Natural killer cell (primary cell): ENCODE measurements at regions of chr6 and their contacts with region 1.

Region 1: DNA sequence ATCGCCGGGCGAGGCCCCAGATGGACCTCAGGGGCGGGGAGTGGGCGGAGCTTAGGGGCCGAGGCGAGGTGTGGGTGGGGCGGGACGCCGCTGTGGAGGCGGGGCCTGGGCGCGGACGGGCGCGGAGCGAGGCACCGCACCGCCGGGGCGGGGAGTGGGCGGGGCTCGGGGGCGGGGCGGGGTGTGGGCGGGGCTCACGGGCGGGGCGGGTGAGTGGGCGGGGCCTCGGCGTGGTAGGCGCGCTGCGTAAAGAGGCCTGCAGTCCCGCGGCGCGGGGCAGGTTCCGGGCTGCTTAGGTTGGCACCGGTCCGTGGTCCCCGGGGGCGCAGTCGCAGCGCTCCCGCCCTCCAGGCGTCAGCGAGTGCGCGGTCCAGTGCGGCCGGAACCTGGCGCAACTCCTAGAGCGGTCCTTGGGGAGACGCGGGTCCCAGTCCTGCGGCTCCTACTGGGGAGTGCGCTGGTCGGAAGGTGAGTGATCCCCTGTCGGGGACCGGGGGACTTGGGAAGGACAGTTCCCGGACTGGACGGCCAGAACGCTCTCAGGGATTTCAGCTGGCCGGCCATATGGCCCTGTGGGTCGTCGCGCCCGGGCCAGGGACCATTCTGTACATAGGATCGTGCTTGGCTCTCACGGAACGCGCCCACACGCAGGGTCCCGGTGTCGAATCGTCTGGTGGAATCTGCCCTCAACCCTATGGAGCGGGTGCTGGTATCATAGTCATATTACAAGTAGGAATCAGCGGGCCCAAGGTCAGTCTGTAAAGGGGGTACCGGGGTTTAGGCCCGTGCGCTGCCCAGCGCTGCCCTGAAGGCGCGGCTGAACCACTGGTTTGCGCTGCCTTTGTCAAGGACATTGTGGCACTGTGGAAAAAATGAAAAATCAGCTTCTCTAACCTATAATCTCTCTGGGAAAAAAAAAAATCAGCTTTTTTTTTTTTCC is at the start of gene NQO2:
- DNase-seq: peak; percentile 86 to 93
- ATAC-seq: peak; percentile 80 to 94 (median 88)
- H3K4me3 ChIP-seq: peak within 1 kb of the TSS; percentile 88
- H3K4me3 Mint-ChIP-seq: peak within 1 kb of the TSS; percentile 92
- H3K27ac ChIP-seq: peak within 1 kb of the TSS; percentile 76
- H3K27ac Mint-ChIP-seq: peak within 1 kb of the TSS; percentile 74 to 86
- H3K4me1 ChIP-seq: peaks cover 23% of the 10 kb centered on the region
- H3K4me1 Mint-ChIP-seq: peaks cover 21 to 37% of the 10 kb centered on the region in 2 donors
- H3K27me3 ChIP-seq: no peaks in the 10 kb centered on the region
- H3K27me3 Mint-ChIP-seq: no peaks in the 10 kb centered on the region
- CTCF ChIP-seq: no peak
- total RNA-seq, gene NQO2: 13.1 to 21.7 (median 16.2) TPM

Region 2: GRCh38 chr6:2244316-2245093 is 755.4 kb before region 1 on chr6:
- intact Hi-C with region 1: no loop called
- DNase-seq: no peak
- ATAC-seq: no peak
- H3K4me3 ChIP-seq: peak overlapping the region; percentile 77
- H3K4me3 Mint-ChIP-seq: peak overlapping the region; percentile 91
- H3K27ac ChIP-seq: peak overlapping the region; percentile 36
- H3K27ac Mint-ChIP-seq: peak overlapping the region; percentile 75 to 91
- H3K4me1 ChIP-seq: peaks cover 22% of the 10 kb centered on the region
- H3K4me1 Mint-ChIP-seq: peaks cover 43 to 52% of the 10 kb centered on the region in 2 donors
- H3K27me3 ChIP-seq: no peaks in the 10 kb centered on the region
- H3K27me3 Mint-ChIP-seq: no peaks in the 10 kb centered on the region
- CTCF ChIP-seq: no peak

Region 3: GRCh38 chr6:2940010-2940850 is 59.7 kb before region 1 on chr6:
- intact Hi-C with region 1: no loop called
- DNase-seq: peak; percentile 64 to 89
- ATAC-seq: peak; percentile 81 to 89 (median 81)
- H3K4me3 ChIP-seq: peak overlapping the region; percentile 16
- H3K4me3 Mint-ChIP-seq: peak overlapping the region; percentile 81
- H3K27ac ChIP-seq: peak overlapping the region; percentile 66
- H3K27ac Mint-ChIP-seq: peak overlapping the region; percentile 94 to 96
- H3K4me1 ChIP-seq: peaks cover 67% of the 10 kb centered on the region
- H3K4me1 Mint-ChIP-seq: peaks cover 59 to 66% of the 10 kb centered on the region in 2 donors
- H3K27me3 ChIP-seq: no peaks in the 10 kb centered on the region
- H3K27me3 Mint-ChIP-seq: no peaks in the 10 kb centered on the region
- CTCF ChIP-seq: no peak

Region 4: DNA sequence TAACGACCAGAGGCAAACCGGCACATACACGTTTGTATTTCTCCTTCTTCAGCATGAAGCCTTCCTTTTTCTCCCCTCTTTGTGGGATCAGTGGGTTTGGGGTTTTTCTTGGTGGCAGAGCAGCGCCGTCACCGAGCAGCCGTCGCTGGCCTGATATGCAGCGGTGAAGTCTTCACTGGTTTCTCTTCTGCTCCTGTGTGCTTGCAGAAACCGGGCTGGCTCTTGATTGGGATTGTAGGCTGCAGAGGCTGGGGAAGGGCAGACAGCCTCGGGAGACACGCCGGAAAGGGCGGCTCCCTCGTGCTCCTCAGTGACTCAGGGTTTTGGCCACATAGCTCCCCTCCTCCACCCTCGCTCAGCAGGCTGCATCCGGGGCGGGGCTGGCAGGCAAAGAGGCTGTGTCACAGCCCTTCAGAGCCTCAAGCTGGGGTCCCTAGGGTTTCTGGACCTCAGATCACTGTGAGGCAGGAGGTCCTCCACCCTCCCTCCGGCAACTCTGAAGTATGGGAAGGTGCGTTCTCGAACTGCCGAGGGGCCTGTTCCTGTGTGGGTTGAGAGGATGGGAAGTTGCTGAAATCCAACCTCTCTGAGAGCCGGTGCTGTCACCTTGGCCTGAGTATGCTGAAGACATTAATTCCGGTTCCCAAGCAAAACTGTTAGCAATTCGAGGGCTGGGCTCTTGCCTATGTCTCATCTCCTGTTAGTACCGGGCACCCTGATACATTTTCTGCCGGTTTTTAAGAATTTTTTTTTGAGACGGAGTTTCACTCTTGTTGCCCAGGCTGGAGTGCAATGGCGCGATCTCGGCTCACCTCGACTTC is 24.0 kb after region 1 on chr6:
- intact Hi-C with region 1: loop called (anchors 1 kb)
- DNase-seq: peak; percentile 80 to 88
- ATAC-seq: peak; percentile 90 to 94 (median 94)
- H3K4me3 ChIP-seq: peak overlapping the region; percentile 59
- H3K4me3 Mint-ChIP-seq: peak overlapping the region; percentile 99
- H3K27ac ChIP-seq: peak overlapping the region; percentile 92
- H3K27ac Mint-ChIP-seq: peak overlapping the region; percentile 86 to 96
- H3K4me1 ChIP-seq: peaks cover 68% of the 10 kb centered on the region
- H3K4me1 Mint-ChIP-seq: peaks cover 42 to 44% of the 10 kb centered on the region in 2 donors
- H3K27me3 ChIP-seq: no peaks in the 10 kb centered on the region
- H3K27me3 Mint-ChIP-seq: no peaks in the 10 kb centered on the region
- CTCF ChIP-seq: no peak

Region 5: DNA sequence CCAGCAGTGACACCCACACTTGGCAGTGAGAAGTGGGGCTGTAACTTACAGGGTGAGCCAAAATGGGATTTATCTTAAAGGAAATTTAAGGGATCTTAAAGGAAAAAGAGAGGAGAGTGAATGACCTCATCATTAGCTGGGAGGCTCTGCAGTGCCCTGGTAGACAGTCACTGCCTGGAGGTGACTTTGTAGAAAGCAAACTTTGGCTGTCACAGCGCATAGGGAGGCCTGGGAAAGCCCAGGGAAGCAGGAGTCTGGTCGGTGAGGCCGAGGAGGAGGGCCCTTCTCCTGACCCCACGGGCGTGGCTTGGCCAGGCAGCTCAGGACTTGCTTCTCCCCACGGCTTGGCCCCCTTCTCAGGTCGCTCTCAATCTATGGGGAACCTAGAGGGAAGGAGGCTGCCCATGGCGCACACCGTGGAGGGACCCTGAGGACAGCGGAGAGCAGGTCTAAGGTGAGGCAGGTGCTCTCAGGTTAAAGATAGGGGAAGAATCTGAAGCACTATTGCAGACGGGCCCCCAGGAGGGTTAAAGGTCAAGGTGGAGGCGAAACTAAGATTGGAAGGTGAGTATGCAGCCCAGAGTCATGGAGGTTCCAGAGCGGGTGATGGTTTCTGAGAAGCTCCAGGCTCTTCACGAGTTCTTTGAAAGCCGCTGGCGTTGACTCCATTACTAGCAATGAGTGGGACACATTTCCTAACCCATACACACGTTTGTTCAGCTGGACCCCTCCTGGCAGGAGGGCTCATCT is 52.8 kb after region 1 on chr6:
- intact Hi-C with region 1: loop called (anchors 1 kb)
- DNase-seq: no peak
- ATAC-seq: no peak
- H3K4me3 ChIP-seq: no peak overlapping the region
- H3K4me3 Mint-ChIP-seq: peak overlapping the region; percentile 68
- H3K27ac ChIP-seq: no peak overlapping the region
- H3K27ac Mint-ChIP-seq: peak overlapping the region in 1 of 2 donors; percentile 71
- H3K4me1 ChIP-seq: peaks cover 21% of the 10 kb centered on the region
- H3K4me1 Mint-ChIP-seq: peaks cover 10 to 17% of the 10 kb centered on the region in 2 donors
- H3K27me3 ChIP-seq: no peaks in the 10 kb centered on the region
- H3K27me3 Mint-ChIP-seq: peaks cover 0 to 11% of the 10 kb centered on the region in 2 donors
- CTCF ChIP-seq: no peak

Region 6: DNA sequence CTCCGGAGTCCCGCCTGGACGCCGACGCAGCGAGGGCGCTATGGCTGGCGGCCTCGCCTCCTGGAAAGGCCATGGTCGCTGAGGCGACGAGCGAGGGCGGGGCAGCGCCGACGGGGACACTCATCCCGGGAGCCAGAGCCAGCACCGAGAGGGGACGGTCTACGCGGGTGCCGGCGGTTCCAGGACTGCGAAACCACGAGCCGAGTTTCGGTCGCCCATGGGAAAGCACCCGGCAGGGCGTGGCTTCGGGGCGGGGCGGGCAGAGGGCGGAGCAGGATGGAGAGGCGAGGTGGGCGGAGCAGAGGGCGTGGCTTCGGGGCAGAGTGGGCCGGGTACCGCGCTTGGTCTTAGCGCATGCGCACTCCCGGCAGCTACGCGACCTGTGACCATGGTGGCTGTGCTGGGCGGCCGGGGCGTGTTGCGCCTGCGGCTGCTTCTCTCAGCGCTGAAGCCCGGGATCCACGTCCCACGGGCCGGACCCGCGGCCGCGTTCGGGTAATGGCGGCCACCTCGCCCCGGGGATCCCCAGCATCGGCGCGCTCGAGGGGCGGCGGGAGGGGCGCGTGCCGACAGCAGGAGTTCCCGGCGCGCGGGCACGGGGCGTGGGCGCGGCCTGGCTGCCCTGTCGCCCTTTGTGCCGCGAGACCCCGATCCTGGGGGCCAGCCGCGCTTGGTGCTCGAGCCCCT is 118.6 kb after region 1 on chr6 and contains the start of gene BPHL:
- intact Hi-C with region 1: loop called (anchors 5 kb)
- DNase-seq: peak; percentile 99 to 100
- ATAC-seq: peak; percentile 91 to 99 (median 94)
- H3K4me3 ChIP-seq: peak within 1 kb of the TSS; percentile 69
- H3K4me3 Mint-ChIP-seq: peak within 1 kb of the TSS; percentile 92
- H3K27ac ChIP-seq: peak within 1 kb of the TSS; percentile 95
- H3K27ac Mint-ChIP-seq: peak within 1 kb of the TSS; percentile 91 to 97
- H3K4me1 ChIP-seq: peaks cover 7% of the 10 kb centered on the region
- H3K4me1 Mint-ChIP-seq: peaks cover 17 to 18% of the 10 kb centered on the region in 2 donors
- H3K27me3 ChIP-seq: no peaks in the 10 kb centered on the region
- H3K27me3 Mint-ChIP-seq: no peaks in the 10 kb centered on the region
- CTCF ChIP-seq: no peak
- total RNA-seq, gene BPHL: 2.9 to 5.9 (median 5.7) TPM

Region 7: GRCh38 chr6:3251462-3252314 is 251.8 kb after region 1 on chr6:
- intact Hi-C with region 1: loop called (anchors 5 kb)
- DNase-seq: peak; percentile 65 to 88
- ATAC-seq: peak; percentile 84 to 99 (median 97)
- H3K4me3 ChIP-seq: no peak overlapping the region
- H3K4me3 Mint-ChIP-seq: no peak overlapping the region
- H3K27ac ChIP-seq: no peak overlapping the region
- H3K27ac Mint-ChIP-seq: peak overlapping the region in 1 of 2 donors; percentile 64
- H3K4me1 ChIP-seq: peaks cover 10% of the 10 kb centered on the region
- H3K4me1 Mint-ChIP-seq: peaks cover 8 to 12% of the 10 kb centered on the region in 2 donors
- H3K27me3 ChIP-seq: peaks cover 3% of the 10 kb centered on the region
- H3K27me3 Mint-ChIP-seq: peaks cover 35 to 40% of the 10 kb centered on the region in 2 donors
- CTCF ChIP-seq: peak; percentile 98